A549 (cell line): ENCODE measurements at regions of chr9 and their contacts with region 1.

Region 1: DNA sequence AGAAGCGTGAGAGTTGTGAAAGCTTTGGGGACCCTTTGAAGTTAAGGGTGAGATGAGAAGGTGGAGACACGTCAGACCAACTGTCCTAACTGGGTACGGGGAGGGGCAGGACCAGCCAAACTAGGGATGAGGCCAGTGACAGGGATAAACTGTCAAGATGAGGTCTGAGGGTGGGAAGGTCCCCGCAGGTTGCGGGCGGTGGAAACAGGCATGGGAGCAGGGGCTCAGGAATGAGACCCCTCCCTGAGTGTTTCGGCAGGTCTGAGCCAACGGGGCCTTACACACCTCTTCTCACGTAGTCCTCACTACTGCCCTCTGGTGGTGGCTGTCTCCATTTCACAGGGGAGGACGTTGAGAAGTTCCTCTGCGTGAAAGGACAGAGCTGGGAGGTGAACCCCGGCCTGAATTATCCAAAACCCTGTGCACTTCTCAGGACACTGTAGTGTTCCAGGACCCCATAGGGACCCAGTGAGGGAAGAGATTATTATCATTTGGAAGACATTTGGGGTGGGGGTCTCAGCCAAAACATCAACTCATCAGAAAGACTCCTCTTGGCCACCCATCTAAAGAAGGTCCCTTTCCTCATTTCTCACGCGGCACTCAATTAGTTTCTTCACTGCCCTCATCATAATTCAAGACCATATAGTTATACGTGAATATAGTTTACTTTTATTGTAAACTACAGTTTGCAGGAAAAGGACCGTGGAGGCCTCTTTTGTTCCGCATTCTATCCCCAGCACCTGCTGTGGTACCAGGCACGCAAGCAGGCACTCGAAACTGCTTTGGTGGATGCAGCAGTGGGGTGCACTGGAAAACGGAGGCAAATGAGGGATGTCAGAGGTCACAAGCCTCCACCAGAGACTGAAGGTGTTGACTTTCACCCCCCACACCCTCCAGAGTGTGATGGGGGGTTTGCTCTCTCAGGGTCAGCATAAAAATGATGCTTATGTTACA is 21.7 kb upstream of the NANS start:
- DNase-seq: peak; percentile 83 to 84
- ATAC-seq: peak; percentile 96 to 97
- H3K4me3 ChIP-seq: no peak overlapping the region
- H3K27ac ChIP-seq: no peak overlapping the region
- H3K4me1 ChIP-seq: no peaks in the 10 kb centered on the region
- CTCF ChIP-seq: peak; percentile 71
- EP300 ChIP-seq: no peak
- POLR2A ChIP-seq: no peak
- RAD21 ChIP-seq: peak; percentile 50 to 52; a peak in 4 of 5 replicates

Region 2: DNA sequence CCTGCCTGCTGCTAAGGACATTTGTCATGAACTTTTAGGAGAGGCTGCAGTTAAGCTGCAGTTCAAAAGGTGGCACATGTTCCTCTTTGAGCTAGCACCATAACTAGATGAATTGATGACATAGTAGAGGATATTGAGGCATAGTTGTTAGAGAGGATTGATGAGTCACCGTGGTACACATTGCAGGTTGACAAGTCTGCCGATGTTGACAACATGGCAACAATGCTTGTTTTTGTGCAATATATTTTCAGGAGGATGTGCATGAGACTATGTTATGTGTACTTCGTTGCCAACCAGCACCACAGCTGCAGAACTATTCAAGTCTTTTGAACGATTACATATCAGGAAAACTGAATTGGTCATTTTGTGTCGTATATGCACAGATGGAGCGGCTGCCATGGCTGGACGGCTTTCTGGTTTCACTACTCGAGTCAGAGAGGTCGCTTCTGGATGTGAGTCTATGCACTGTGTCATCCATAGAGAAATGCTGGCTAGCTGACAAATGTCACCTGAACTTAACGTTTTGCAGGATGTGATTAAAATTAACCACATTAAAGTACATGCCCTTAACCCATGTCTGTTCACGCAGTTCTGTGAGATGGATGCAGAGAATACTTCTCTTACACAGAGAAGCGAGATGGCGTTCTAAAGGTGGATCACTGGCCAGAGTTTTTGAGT is 27.5 kb before region 1 on chr9:
- CTCF ChIA-PET with region 1: interaction called, 15 read pairs
- POLR2A ChIA-PET with region 1: no interaction called
- DNase-seq: peak in 1 of 2 experiments; percentile 18
- ATAC-seq: no peak
- H3K4me3 ChIP-seq: no peak overlapping the region
- H3K27ac ChIP-seq: no peak overlapping the region
- H3K4me1 ChIP-seq: peaks cover 6% of the 10 kb centered on the region; the same call in 1 of the 3 replicates
- CTCF ChIP-seq: no peak
- EP300 ChIP-seq: no peak
- POLR2A ChIP-seq: no peak
- RAD21 ChIP-seq: no peak

Region 3: DNA sequence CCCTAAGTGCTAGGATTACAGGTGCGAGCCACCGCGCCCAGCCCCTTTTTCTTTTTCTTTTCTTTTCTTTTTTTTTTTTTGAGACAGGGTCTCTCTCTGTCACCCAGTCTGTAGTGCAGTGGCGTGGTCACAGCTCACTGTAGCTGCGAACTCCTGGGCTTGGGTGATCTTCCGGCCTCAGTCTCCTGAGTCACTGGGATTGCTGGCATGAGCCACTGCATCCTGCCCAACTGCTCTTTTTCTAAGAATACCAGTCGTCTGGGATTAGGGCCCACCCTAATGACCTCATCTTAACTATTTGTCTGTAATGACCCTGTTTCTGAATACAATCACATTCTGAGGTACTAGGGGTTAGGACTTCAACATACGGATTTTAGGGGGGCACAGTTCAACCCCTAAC is 12.4 kb before region 1 on chr9:
- CTCF ChIA-PET with region 1: interaction called, 39 read pairs
- POLR2A ChIA-PET with region 1: no interaction called
- DNase-seq: no peak
- ATAC-seq: no peak
- H3K4me3 ChIP-seq: no peak overlapping the region
- H3K27ac ChIP-seq: no peak overlapping the region
- H3K4me1 ChIP-seq: no peaks in the 10 kb centered on the region
- CTCF ChIP-seq: no peak
- EP300 ChIP-seq: no peak
- POLR2A ChIP-seq: no peak
- RAD21 ChIP-seq: no peak

Region 4: DNA sequence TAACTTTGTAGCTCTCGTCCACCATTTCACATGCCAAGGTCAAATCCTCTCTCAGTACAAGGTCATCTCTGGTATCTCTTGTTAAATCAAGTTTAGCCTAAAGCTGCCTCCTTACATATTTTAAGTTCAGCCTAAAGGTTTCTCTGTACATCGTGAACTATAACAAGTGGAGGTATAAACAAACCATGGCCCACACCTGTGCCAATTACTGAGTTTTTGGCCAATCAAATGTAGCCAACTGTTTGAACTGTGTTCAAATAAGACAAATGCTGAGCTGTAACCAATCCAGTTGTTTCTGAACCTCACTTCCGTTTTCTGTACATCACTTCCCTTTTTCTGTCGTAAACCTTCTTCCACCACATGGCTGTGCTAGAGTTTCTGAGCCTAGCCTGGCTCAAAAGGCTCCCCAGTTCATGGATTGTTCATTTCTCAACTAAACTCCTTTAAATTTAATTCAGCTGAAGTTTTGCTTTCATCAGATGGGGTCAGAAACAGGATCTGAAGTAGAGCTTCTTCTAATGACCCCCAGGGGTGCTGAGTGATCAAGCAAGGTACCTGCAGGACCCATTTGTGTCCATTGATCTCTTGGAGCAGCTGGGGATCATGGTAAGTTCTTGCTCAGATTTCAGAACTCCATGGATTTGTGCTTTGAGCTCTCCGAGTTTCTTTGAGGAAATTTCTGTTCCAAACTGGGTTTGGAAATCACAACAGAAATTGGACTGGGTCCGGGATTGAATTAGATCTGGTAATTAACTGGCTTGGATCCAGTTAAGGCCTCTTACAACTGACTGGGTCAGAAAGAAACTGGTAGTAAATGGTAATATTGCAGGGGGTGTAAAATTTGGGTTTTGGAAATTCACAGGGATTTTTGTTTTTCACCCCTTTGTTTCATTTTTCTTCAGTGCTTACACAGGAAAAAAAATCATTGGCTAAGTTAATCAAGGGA is 10.6 kb after region 1 on chr9:
- CTCF ChIA-PET with region 1: interaction called, 31 read pairs
- POLR2A ChIA-PET with region 1: no interaction called
- DNase-seq: peak in 1 of 2 experiments; percentile 47
- ATAC-seq: peak in 1 of 2 experiments; percentile 49; a peak in 2 of 6 replicates
- H3K4me3 ChIP-seq: no peak overlapping the region
- H3K27ac ChIP-seq: no peak overlapping the region
- H3K4me1 ChIP-seq: no peaks in the 10 kb centered on the region
- CTCF ChIP-seq: no peak
- EP300 ChIP-seq: no peak
- POLR2A ChIP-seq: no peak
- RAD21 ChIP-seq: no peak

Region 5: DNA sequence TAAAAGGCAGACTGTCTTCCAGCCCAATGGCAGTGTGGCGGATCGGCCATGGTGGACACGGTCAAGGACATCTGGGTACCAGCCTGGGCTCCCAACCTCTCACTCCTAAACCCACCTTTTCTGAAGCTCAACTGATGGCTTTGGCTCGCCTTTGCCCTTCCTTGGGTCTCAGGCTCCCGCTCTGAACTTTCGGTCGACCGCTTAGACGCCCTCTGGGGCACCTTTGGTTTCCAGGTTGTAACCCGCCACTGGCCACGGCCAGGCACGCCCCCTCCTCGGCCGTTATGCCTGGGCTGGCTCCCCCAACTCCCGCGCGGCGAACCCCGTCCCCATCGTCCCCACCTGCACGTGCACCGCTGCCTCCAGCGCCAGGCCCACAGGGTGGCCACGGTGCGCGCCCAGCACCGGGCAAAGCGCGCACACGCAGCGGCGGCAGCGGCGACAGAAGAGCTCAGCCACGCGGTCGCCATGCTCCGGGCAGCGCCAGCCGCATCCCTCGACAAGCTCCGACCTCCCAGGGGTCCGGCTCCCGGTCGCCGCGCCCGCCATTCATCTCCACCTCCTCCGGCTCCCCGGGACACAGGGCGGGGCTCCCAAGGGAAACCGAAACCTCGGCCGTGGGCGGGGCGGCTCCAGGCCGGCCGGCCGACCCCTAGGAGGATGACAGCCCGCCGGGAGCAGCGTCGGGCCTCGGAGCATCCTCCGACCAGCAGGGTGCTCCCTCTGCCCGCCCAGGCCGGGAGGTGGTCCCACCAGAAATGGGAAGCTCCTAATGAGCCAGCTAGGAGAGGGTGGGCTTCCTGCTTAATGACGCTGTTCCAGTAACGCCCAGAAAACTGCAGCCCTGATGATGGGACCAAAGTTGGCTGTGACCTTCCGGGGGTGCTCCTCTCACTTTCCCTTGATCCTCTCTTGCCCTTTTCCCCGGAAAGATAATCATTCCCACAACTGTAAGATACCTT is 84.1 kb after region 1 on chr9 and contains the start of gene TRIM14:
- CTCF ChIA-PET with region 1: no interaction called
- POLR2A ChIA-PET with region 1: no interaction called
- DNase-seq: peak; percentile 47 to 83
- ATAC-seq: peak; percentile 81 to 92
- H3K4me3 ChIP-seq: peak within 1 kb of the TSS; percentile 70
- H3K27ac ChIP-seq: peak within 1 kb of the TSS; percentile 77 to 89
- H3K4me1 ChIP-seq: peaks cover 19% of the 10 kb centered on the region
- CTCF ChIP-seq: peak; percentile 38; the same call in 2 of the 3 replicates
- EP300 ChIP-seq: no peak
- POLR2A ChIP-seq: peak; percentile 34
- RAD21 ChIP-seq: peak; percentile 30 to 57; a peak in 4 of 5 replicates
- polyA plus RNA-seq, gene TRIM14: 9.2 and 9.7 TPM in 2 replicates